Activated T-helper 2 cell treated with anti-CD3 and anti-CD28 coated beads, Interferon-gamma antibody, Interleukin-2, Interleukin-4, amounts not matched to agents 10 μg/mL and 5 μg/mL and 100 μg/mL, durations not matched to agents 14 hours and 24 hours and 36 hours (primary cell): ENCODE measurements at regions of chr11 and their contacts with region 1.

Region 1: GRCh38 chr11:34357701-34358257 is at the start of gene ABTB2:
- DNase-seq: peak; percentile 97
- H3K4me3 Mint-ChIP-seq: peak within 1 kb of the TSS; percentile 92
- H3K27ac Mint-ChIP-seq: peak within 1 kb of the TSS; percentile 65
- H3K4me1 Mint-ChIP-seq: peaks cover 39% of the 10 kb centered on the region
- H3K27me3 Mint-ChIP-seq: peaks cover 37% of the 10 kb centered on the region
- total RNA-seq, gene ABTB2: 32.9 and 33.1 TPM in 2 replicates

Region 2: DNA sequence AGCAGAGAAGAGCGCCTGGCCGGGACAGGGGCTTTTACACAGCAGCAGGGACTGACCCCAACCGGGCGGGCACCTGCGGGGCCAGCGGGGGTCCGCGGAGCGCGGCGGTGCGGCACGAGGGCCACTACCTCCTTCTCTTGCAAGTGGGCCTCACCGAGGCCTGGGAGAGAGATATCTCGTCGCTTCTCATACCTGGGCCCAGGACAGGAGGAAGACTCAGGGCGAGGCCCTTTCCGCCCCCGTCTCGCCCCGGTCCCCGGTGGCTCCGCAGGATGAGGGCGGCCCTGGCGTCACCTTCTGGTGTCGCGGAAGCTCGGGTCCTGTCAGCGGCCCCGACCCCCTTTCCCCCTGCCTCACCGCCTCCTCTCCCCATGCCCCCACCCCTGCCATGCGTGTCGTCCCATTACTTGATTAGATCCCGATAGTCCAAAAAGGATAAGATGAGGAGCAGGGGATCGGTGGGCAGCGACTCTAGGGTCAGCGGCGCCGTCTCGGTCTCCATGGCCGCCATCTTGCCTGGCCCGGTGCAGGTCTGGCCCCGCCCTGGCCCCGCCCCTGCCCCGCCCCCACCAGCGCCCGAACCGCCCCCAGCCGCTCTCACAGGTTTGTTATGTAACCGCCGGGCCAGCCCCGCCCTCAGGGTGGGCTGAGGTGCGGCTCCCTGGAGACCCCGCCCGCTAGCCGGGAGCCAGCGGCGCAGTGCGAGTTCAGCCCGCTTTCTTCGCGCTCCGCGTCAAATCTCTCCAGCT is 583.6 kb before region 1 on chr11 and contains the start of gene FBXO3:
- intact Hi-C with region 1: loop called (anchors 1 kb)
- DNase-seq: peak; percentile 74
- H3K4me3 Mint-ChIP-seq: peak within 1 kb of the TSS; percentile 93
- H3K27ac Mint-ChIP-seq: peak within 1 kb of the TSS; percentile 87
- H3K4me1 Mint-ChIP-seq: peaks cover 35% of the 10 kb centered on the region
- H3K27me3 Mint-ChIP-seq: peaks cover 28% of the 10 kb centered on the region
- total RNA-seq, gene FBXO3: 13.9 TPM in 2 replicates

Region 3: GRCh38 chr11:33996498-33997454 is 361.0 kb before region 1 on chr11:
- intact Hi-C with region 1: loop called (anchors 1 kb)
- DNase-seq: peak; percentile 65
- H3K4me3 Mint-ChIP-seq: no peak overlapping the region
- H3K27ac Mint-ChIP-seq: no peak overlapping the region
- H3K4me1 Mint-ChIP-seq: peaks cover 9% of the 10 kb centered on the region
- H3K27me3 Mint-ChIP-seq: peaks cover 30% of the 10 kb centered on the region

Region 4: GRCh38 chr11:34105079-34105956 is 252.5 kb before region 1 on chr11 and contains the start of gene NAT10:
- intact Hi-C with region 1: loop called (anchors 1 kb)
- DNase-seq: peak; percentile 97
- H3K4me3 Mint-ChIP-seq: peak within 1 kb of the TSS; percentile 95
- H3K27ac Mint-ChIP-seq: peak within 1 kb of the TSS; percentile 94
- H3K4me1 Mint-ChIP-seq: peaks cover 33% of the 10 kb centered on the region
- H3K27me3 Mint-ChIP-seq: no peaks in the 10 kb centered on the region
- total RNA-seq, gene NAT10: 124 and 125 TPM in 2 replicates

Region 5: DNA sequence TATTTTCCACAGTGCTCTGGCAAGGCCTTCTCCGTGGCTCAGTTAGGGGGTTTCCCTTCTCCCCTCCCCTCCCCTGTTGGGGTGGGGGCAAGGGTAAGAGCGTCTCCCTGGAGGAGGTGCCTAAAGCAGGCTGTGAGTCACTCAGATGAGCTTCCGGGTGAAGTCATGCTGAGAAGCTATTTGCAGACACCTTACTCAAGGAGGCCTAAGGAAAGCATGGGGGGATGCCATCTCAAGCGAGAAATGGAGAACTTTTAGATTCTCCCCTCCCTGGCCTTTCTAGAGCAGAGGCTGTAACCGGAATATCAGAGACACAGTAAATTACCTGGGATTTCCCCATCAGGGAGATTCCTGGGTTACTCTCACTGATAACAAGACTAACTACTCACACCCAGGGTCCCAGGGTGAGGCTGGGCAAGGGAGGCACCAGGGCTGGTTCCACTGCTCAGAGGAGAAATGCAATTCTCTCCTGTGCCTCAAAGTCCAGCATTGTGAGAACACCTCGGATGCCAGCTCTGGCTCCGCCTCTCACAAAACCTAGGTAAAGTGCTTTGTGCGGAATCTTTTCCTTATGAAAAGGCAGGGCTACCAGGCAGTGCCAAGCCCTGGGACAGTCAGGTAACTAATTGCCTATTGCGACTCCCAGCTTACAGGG is 123.6 kb before region 1 on chr11:
- intact Hi-C with region 1: loop called (anchors 1 kb)
- DNase-seq: peak; percentile 77
- H3K4me3 Mint-ChIP-seq: peak overlapping the region; percentile 20
- H3K27ac Mint-ChIP-seq: peak overlapping the region; percentile 88
- H3K4me1 Mint-ChIP-seq: peaks cover 75% of the 10 kb centered on the region
- H3K27me3 Mint-ChIP-seq: no peaks in the 10 kb centered on the region

Region 6: GRCh38 chr11:34438529-34439507 is 81.0 kb after region 1 on chr11 and contains the start of gene CAT:
- intact Hi-C with region 1: loop called (anchors 2 kb)
- DNase-seq: peak; percentile 97
- H3K4me3 Mint-ChIP-seq: peak within 1 kb of the TSS; percentile 90
- H3K27ac Mint-ChIP-seq: peak within 1 kb of the TSS; percentile 89
- H3K4me1 Mint-ChIP-seq: peaks cover 23% of the 10 kb centered on the region
- H3K27me3 Mint-ChIP-seq: no peaks in the 10 kb centered on the region
- total RNA-seq, gene CAT: 31.8 and 33.1 TPM in 2 replicates

Region 7: GRCh38 chr11:34492806-34493414 is 135.1 kb after region 1 on chr11:
- intact Hi-C with region 1: loop called (anchors 5 kb)
- DNase-seq: no peak
- H3K4me3 Mint-ChIP-seq: no peak overlapping the region
- H3K27ac Mint-ChIP-seq: no peak overlapping the region
- H3K4me1 Mint-ChIP-seq: no peaks in the 10 kb centered on the region
- H3K27me3 Mint-ChIP-seq: peaks cover 6% of the 10 kb centered on the region